ENCODE measurements at regions of chr7 and their contacts with region 1.

Region 1: GRCh38 chr7:4319280-4319679 is 362.8 kb upstream of the FOXK1 start:
- DNase-seq: no peak
- ATAC-seq: no peak
- H3K4me3 ChIP-seq: no peak overlapping the region
- H3K27ac ChIP-seq: no peak overlapping the region
- H3K4me1 ChIP-seq: no peaks in the 10 kb centered on the region
- H3K27me3 ChIP-seq: no peaks in the 10 kb centered on the region
- CTCF ChIP-seq: no peak
- EP300 ChIP-seq: no peak
- POLR2A ChIP-seq: no peak
- RAD21 ChIP-seq: no peak

Region 2: DNA sequence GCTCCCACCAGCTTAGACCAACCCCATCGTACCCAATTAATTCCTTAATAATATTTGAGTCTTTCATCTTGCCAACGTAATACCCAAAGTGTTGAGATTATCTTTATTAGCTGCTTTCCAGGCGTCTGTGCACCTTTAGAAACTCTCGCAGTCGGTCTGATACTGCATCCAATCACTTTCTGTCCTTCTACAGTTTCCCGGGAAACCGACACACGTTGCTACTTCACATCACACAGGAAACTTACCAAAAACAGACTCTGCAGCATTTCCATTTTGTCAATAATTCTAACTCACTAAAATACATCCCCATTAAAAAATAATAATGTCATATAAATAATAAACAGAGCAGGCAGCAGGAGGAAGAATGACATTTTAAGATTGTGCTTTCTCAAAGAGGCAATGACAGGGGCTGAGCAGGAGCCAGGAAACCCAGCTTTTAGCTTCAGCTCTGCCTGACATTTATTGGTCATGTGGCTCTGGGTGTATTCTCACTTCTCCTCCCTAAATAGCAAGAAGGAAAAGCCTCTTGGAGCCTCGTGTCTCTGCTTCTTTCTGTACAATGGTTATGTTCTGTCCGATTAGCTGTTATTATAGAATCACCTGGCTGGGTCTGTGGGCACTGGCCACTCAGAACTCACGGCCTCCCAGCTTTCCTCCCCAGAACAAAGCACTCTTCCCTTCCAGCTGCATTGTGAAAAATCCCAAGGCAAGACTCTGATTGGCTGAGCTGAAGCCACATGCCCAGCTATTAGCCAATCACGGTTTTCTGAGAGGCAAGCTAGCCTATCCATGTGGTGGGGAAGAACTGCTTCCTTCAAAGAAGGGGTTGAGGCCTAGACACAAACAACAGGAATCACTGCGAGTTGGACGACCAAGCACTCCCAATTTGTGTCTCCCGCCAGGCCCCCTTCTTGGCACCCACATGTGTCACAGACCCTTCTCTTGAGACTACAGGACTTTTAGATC is 61.9 kb before region 1 on chr7:
- CTCF ChIA-PET with region 1: no interaction called
- POLR2A ChIA-PET with region 1: no interaction called
- RAD21 ChIA-PET with region 1: no interaction called
- SMC1A ChIA-PET with region 1: no interaction called
- in situ Hi-C with region 1: no loop called
- intact Hi-C with region 1: loop called (anchors 10 kb)
- DNase-seq: no peak
- ATAC-seq: no peak
- H3K4me3 ChIP-seq: no peak overlapping the region
- H3K27ac ChIP-seq: no peak overlapping the region
- H3K4me1 ChIP-seq: no peaks in the 10 kb centered on the region
- H3K27me3 ChIP-seq: no peaks in the 10 kb centered on the region
- CTCF ChIP-seq: no peak
- EP300 ChIP-seq: no peak
- POLR2A ChIP-seq: no peak
- RAD21 ChIP-seq: no peak